Activated CD4-positive, alpha-beta T cell treated with anti-CD3 and anti-CD28 coated beads for 36 hours (primary cell): ENCODE measurements at regions of chr19 and their contacts with region 1.

Region 1: GRCh38 chr19:37655689-37656371 is 565 bp upstream of the ZFP30 start:
- DNase-seq: peak; percentile 93
- ATAC-seq: peak; percentile 79
- H3K4me3 Mint-ChIP-seq: peak overlapping the region; percentile 94
- H3K27ac Mint-ChIP-seq: peak overlapping the region; percentile 99
- H3K4me1 Mint-ChIP-seq: peaks cover 33% of the 10 kb centered on the region
- H3K27me3 Mint-ChIP-seq: no peaks in the 10 kb centered on the region

Region 2: DNA sequence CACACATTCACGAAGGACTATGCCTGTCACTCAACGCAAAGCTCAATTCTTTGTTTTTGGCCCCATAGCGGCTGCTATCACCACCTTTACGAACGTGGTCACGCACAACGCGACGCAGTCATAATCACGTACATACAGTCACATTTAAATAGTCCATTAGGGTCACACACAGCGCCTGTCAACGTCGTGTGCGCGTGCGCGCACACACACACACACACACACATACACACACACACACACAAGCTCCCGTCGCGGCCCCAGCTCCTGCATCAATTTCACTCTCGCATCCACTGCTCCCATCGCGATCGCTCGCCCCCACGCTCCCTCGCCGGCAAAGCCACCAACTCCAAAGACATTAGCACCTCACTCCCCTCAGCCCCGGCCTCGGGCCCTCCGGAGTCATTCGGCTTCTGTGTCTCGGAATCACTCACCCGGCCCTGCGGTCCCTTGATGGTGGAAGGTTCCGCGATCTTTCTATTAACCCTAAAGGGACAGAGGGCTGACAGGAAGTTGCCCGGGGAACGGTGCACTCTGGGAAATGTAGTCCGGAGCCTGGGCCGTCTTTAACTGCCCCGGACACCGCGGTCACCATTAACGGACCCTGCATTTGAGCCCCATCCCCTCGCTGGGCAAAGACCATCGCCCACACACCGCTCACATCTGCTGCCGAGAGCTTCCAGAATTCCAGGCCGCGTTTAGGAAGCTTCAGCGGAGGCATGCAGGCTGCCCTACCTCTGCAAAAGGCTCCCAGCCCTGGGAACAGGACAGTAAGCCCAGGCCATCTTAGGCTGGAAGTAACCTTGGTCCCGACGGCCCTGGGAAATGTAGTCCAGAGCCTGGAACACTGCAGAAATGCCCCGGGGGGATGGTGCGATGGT is 817.7 kb before region 1 on chr19 and contains the start of gene ZNF790:
- CTCF ChIA-PET with region 1: no interaction called
- POLR2A ChIA-PET with region 1: no interaction called
- intact Hi-C with region 1: loop called in 1 of 2 experiments (anchors 5 kb)
- DNase-seq: peak; percentile 92
- ATAC-seq: peak; percentile 97
- H3K4me3 Mint-ChIP-seq: no peak within 1 kb of the TSS
- H3K27ac Mint-ChIP-seq: peak within 1 kb of the TSS; percentile 72
- H3K4me1 Mint-ChIP-seq: peaks cover 2% of the 10 kb centered on the region
- H3K27me3 Mint-ChIP-seq: no peaks in the 10 kb centered on the region
- total RNA-seq, gene ZNF790: 7.1 to 8.8 TPM

Region 3: GRCh38 chr19:37217855-37218591 is 437.8 kb before region 1 on chr19 and contains the start of gene ZNF383:
- CTCF ChIA-PET with region 1: no interaction called
- POLR2A ChIA-PET with region 1: no interaction called
- intact Hi-C with region 1: loop called in 1 of 2 experiments (anchors 5 kb)
- DNase-seq: peak; percentile 89
- ATAC-seq: peak; percentile 87
- H3K4me3 Mint-ChIP-seq: peak within 1 kb of the TSS; percentile 93
- H3K27ac Mint-ChIP-seq: peak within 1 kb of the TSS; percentile 99
- H3K4me1 Mint-ChIP-seq: peaks cover 24% of the 10 kb centered on the region
- H3K27me3 Mint-ChIP-seq: no peaks in the 10 kb centered on the region
- total RNA-seq, gene ZNF383: 8.5 to 9.2 TPM

Region 4: DNA sequence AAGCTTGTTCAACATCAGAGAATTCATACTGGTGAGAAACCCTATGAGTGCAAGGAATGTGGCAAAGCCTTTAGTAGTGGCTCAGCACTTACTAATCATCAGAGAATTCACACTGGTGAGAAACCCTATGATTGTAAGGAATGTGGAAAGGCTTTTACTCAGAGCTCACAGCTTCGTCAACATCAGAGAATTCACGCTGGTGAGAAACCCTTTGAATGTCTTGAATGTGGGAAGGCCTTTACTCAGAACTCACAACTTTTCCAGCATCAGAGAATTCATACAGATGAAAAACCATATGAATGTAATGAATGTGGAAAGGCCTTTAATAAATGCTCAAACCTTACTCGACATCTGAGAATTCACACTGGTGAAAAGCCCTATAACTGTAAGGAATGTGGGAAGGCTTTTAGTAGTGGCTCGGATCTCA is 412.6 kb before region 1 on chr19:
- CTCF ChIA-PET with region 1: no interaction called
- POLR2A ChIA-PET with region 1: no interaction called
- intact Hi-C with region 1: no loop called
- DNase-seq: no peak
- ATAC-seq: no peak
- H3K4me3 Mint-ChIP-seq: no peak overlapping the region
- H3K27ac Mint-ChIP-seq: no peak overlapping the region
- H3K4me1 Mint-ChIP-seq: no peaks in the 10 kb centered on the region
- H3K27me3 Mint-ChIP-seq: no peaks in the 10 kb centered on the region

Region 5: GRCh38 chr19:37691881-37692504 is 36.2 kb after region 1 on chr19:
- CTCF ChIA-PET with region 1: no interaction called
- POLR2A ChIA-PET with region 1: interaction called, 3 read pairs
- intact Hi-C with region 1: loop called in 1 of 2 experiments (anchors 1 kb)
- DNase-seq: peak; percentile 93
- ATAC-seq: peak; percentile 96
- H3K4me3 Mint-ChIP-seq: peak overlapping the region; percentile 92
- H3K27ac Mint-ChIP-seq: peak overlapping the region; percentile 95
- H3K4me1 Mint-ChIP-seq: peaks cover 9% of the 10 kb centered on the region
- H3K27me3 Mint-ChIP-seq: no peaks in the 10 kb centered on the region

Region 6: GRCh38 chr19:37763488-37763887 is 107.7 kb after region 1 on chr19:
- CTCF ChIA-PET with region 1: no interaction called
- POLR2A ChIA-PET with region 1: no interaction called
- intact Hi-C with region 1: loop called in 1 of 2 experiments (anchors 5 kb)
- DNase-seq: peak; percentile 38
- ATAC-seq: peak; percentile 91
- H3K4me3 Mint-ChIP-seq: no peak overlapping the region
- H3K27ac Mint-ChIP-seq: no peak overlapping the region
- H3K4me1 Mint-ChIP-seq: peaks cover 4% of the 10 kb centered on the region
- H3K27me3 Mint-ChIP-seq: no peaks in the 10 kb centered on the region